T-cell (primary cell): ENCODE measurements at regions of chr1 and their contacts with region 1.

Region 1: DNA sequence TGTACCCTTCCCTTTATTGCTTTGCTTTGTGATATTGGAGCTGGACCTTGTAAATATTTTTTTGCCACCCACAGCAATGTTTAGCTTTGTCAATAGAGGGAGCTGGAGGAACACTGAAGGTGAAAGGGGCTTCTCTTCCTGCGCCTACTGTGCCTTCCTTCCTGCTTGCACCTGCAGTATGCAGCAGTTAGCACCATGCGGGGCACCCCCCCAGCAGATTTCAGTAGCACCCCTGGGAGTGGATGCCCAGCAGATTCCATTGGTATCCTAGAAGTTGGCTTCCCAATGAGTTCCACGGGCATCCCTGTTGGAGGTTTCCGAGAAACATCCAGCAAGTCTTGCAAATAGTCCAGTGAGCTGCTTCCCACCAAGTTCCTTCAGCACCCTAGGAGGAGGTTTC is 25.6 kb downstream of the S100A10 start:
- DNase-seq: peak in 32 of 35 experiments; percentile 10 to 82 (median 40)
- ATAC-seq: peak; percentile 86 to 99 (median 96)
- H3K4me3 ChIP-seq: no peak overlapping the region
- H3K4me3 Mint-ChIP-seq: no peak overlapping the region
- H3K27ac ChIP-seq: no peak overlapping the region
- H3K27ac Mint-ChIP-seq: no peak overlapping the region
- H3K4me1 ChIP-seq: peaks cover 0 to 5% of the 10 kb centered on the region in 2 experiments
- H3K4me1 Mint-ChIP-seq: peaks cover 8 to 17% (median 10%) of the 10 kb centered on the region in 3 donors
- H3K27me3 ChIP-seq: peaks cover 0 to 4% of the 10 kb centered on the region in 2 experiments
- H3K27me3 Mint-ChIP-seq: peaks cover 3 to 7% of the 10 kb centered on the region in 2 donors

Region 2: GRCh38 chr1:151619489-151620093 is 348.5 kb before region 1 on chr1:
- CTCF ChIA-PET with region 1: no interaction called
- POLR2A ChIA-PET with region 1: no interaction called
- DNase-seq: no peak
- ATAC-seq: no peak
- H3K4me3 ChIP-seq: no peak overlapping the region
- H3K4me3 Mint-ChIP-seq: no peak overlapping the region
- H3K27ac ChIP-seq: no peak overlapping the region
- H3K27ac Mint-ChIP-seq: peak overlapping the region in 1 of 2 donors; percentile 13
- H3K4me1 ChIP-seq: peaks cover 0 to 4% of the 10 kb centered on the region in 2 experiments
- H3K4me1 Mint-ChIP-seq: peaks cover 41 to 59% (median 55%) of the 10 kb centered on the region in 3 donors
- H3K27me3 ChIP-seq: no peaks in the 10 kb centered on the region
- H3K27me3 Mint-ChIP-seq: no peaks in the 10 kb centered on the region

Region 3: GRCh38 chr1:151934048-151934493 is 34.0 kb before region 1 on chr1:
- CTCF ChIA-PET with region 1: interaction called, 4 to 10 read pairs
- POLR2A ChIA-PET with region 1: no interaction called
- DNase-seq: peak in 25 of 35 experiments; percentile 9 to 82 (median 31)
- ATAC-seq: peak; percentile 75 to 86 (median 83)
- H3K4me3 ChIP-seq: no peak overlapping the region
- H3K4me3 Mint-ChIP-seq: no peak overlapping the region
- H3K27ac ChIP-seq: no peak overlapping the region
- H3K27ac Mint-ChIP-seq: peak overlapping the region; percentile 23 to 46
- H3K4me1 ChIP-seq: peaks cover 0 to 3% of the 10 kb centered on the region in 2 experiments
- H3K4me1 Mint-ChIP-seq: peaks cover 5 to 8% (median 6%) of the 10 kb centered on the region in 3 donors
- H3K27me3 ChIP-seq: no peaks in the 10 kb centered on the region
- H3K27me3 Mint-ChIP-seq: peaks cover 3 to 4% of the 10 kb centered on the region in 2 donors

Region 4: DNA sequence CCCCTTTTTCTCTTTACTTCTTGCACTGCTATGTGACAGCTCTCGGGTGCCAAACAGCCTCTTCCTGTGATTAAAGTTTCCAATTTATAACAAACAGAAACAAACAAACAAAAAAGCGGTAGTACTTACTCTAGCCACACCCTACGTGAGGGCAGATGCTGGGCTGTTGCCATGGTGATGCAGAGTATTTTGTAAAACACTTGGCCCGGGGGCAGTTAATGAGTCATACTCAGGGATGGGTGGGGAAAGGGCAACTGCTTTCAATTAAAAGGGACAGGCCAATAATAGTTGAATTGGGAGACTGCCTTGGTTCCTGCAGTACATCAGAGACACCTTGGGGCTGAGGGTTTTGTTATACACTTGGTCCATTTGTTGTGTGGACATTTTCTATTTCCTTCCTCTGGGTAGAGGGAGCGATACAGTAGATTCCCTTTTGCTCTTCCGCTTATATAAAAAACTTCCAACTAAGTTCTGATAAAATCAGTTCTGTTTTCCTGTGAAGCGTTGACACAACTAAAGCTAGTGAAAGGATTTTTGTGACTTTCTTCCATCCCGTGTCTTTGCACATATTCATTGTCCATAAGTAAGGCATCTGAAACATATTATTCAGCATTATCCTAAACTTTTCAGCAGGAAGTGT is 22.2 kb before region 1 on chr1:
- CTCF ChIA-PET with region 1: interaction called, 4 to 15 read pairs
- POLR2A ChIA-PET with region 1: interaction called in 1 of 2 experiments, 4 read pairs
- DNase-seq: peak; percentile 30 to 93 (median 77)
- ATAC-seq: peak; percentile 73 to 92 (median 84)
- H3K4me3 ChIP-seq: no peak overlapping the region
- H3K4me3 Mint-ChIP-seq: peak overlapping the region; percentile 19 to 68 (median 36)
- H3K27ac ChIP-seq: peak overlapping the region; percentile 96
- H3K27ac Mint-ChIP-seq: peak overlapping the region; percentile 89 to 94
- H3K4me1 ChIP-seq: peaks cover 5 to 30% of the 10 kb centered on the region in 2 experiments
- H3K4me1 Mint-ChIP-seq: peaks cover 29 to 49% (median 36%) of the 10 kb centered on the region in 3 donors
- H3K27me3 ChIP-seq: peaks cover 0 to 2% of the 10 kb centered on the region in 2 experiments
- H3K27me3 Mint-ChIP-seq: no peaks in the 10 kb centered on the region

Region 5: DNA sequence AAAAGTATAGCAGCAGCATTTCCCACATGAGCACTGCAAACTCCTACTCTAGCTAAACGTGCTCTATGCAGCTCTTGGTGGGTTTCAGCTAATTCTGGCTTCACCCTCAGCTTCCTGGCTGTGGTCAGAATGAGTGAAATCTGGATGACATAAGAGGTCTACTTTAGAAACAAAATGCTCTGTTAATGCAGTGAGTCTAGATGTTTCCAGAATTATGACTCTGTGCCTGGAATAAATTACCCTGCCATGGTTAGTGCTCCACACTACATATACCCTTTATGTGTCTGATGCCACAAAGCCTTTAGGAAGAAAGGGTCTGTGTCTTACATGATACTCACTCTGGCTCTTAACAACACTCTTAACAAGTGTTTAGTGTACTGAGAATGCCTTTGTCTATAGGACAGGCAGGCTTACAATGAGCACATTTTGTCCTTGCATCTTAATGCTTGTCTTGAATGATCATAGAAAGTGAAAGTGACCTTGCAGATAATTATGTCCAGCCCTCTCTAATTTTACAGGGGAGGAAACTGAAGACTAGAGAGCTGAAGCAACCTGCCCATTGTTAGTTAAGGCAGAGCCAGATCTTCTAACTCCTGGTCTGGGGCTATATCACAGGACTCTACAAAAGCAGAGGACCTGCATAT is 16.4 kb after region 1 on chr1:
- CTCF ChIA-PET with region 1: interaction called in 1 of 2 experiments, 10 read pairs
- POLR2A ChIA-PET with region 1: no interaction called
- DNase-seq: peak in 1 of 35 experiments; percentile 42
- ATAC-seq: peak; percentile 63 to 85 (median 72)
- H3K4me3 ChIP-seq: no peak overlapping the region
- H3K4me3 Mint-ChIP-seq: no peak overlapping the region
- H3K27ac ChIP-seq: peak overlapping the region; percentile 50
- H3K27ac Mint-ChIP-seq: peak overlapping the region; percentile 47 to 82
- H3K4me1 ChIP-seq: peaks cover 0 to 23% of the 10 kb centered on the region in 2 experiments
- H3K4me1 Mint-ChIP-seq: peaks cover 44 to 55% (median 54%) of the 10 kb centered on the region in 3 donors
- H3K27me3 ChIP-seq: no peaks in the 10 kb centered on the region
- H3K27me3 Mint-ChIP-seq: no peaks in the 10 kb centered on the region

Region 6: GRCh38 chr1:151993654-151994496 is 25.8 kb after region 1 on chr1 and contains the start of gene S100A10:
- CTCF ChIA-PET with region 1: interaction called, 3 to 95 read pairs
- POLR2A ChIA-PET with region 1: interaction called in 1 of 2 experiments, 3 read pairs
- DNase-seq: peak; percentile 66 to 88 (median 76)
- ATAC-seq: peak; percentile 89 to 94 (median 91)
- H3K4me3 ChIP-seq: peak within 1 kb of the TSS; percentile 65 to 92
- H3K4me3 Mint-ChIP-seq: peak within 1 kb of the TSS; percentile 93 to 97 (median 96)
- H3K27ac ChIP-seq: peak within 1 kb of the TSS; percentile 89
- H3K27ac Mint-ChIP-seq: peak within 1 kb of the TSS; percentile 96 to 97
- H3K4me1 ChIP-seq: peaks cover 12 to 39% of the 10 kb centered on the region in 2 experiments
- H3K4me1 Mint-ChIP-seq: peaks cover 46 to 54% (median 48%) of the 10 kb centered on the region in 3 donors
- H3K27me3 ChIP-seq: peaks cover 0 to 2% of the 10 kb centered on the region in 2 experiments
- H3K27me3 Mint-ChIP-seq: no peaks in the 10 kb centered on the region
- total RNA-seq, gene S100A10: 157 to 277 (median 264) TPM